ENCODE measurements at regions of chr1 and their contacts with region 1.

Region 1: GRCh38 chr1:202926720-202927491 is at the start of gene KLHL12:
- DNase-seq: peak; percentile 97
- ATAC-seq: peak; percentile 99 to 100
- total RNA-seq, gene KLHL12: 18.0 to 20.1 TPM

Region 2: GRCh38 chr1:202964680-202965410 is 37.9 kb after region 1 on chr1:
- intact Hi-C with region 1: loop called in 1 of 2 experiments (anchors 5 kb)
- DNase-seq: peak; percentile 29
- ATAC-seq: peak; percentile 4 to 17

Region 3: DNA sequence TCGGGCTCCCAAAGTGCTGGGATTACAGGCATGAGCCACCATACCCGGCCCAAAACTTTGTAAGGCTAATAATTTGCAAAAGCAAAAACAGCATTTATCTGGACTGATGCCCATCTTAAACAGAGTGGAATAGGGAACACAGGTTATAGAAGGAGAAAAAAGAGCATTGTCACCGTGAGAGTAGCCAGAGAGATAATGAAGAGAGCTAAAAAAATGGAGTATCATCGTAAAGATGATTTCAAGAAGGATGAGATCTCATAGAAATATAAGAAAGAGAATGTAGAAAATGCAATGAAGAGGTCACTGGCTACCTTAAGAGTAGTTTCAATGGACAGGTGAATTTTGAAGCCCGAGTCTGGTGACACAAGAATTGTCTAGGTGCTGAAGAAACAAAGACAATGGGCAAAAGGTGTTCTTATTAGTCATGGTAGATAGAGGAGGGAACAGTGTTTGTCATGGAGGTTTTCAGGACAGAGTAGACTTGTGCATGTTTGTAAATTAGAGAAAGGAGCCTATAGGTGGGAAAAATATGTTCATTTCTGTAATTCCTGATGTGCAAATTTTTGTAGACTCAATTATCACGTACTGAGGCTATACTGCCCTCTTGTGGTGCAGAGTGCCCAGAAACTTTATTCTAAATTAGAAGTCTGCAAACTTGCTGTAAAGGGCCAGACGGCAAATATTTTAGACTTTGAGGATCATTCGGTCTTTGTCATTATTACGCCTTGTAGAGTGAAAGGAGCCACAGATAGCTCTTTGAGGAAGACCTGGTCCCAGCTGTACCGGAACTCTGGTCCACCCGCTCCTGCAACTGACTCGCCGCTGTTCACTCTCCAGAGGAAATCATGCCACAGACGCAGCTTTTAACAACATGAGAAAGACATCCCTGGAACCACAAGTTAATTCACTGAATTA is 72.2 kb after region 1 on chr1:
- intact Hi-C with region 1: loop called (anchors 5 to 10 kb)
- DNase-seq: peak; percentile 47
- ATAC-seq: peak in 1 of 2 donors; percentile 30

Region 4: GRCh38 chr1:203006948-203007871 is 80.3 kb after region 1 on chr1 and contains the start of gene TMEM183A:
- intact Hi-C with region 1: loop called in 1 of 2 experiments (anchors 10 kb)
- DNase-seq: peak; percentile 97
- ATAC-seq: peak; percentile 98 to 99
- total RNA-seq, gene TMEM183A: 25.1 to 31.8 TPM

Region 5: GRCh38 chr1:203229471-203230135 is 302.7 kb after region 1 on chr1 and contains the start of gene CHIT1:
- intact Hi-C with region 1: no loop called
- DNase-seq: no peak
- ATAC-seq: no peak
- total RNA-seq, gene CHIT1: 0.63 to 1.3 TPM

Measured in left cardiac atrium (tissue), 4 donors.